T-cell (primary cell): ENCODE measurements at regions of chr6 and their contacts with region 1.

Region 1: DNA sequence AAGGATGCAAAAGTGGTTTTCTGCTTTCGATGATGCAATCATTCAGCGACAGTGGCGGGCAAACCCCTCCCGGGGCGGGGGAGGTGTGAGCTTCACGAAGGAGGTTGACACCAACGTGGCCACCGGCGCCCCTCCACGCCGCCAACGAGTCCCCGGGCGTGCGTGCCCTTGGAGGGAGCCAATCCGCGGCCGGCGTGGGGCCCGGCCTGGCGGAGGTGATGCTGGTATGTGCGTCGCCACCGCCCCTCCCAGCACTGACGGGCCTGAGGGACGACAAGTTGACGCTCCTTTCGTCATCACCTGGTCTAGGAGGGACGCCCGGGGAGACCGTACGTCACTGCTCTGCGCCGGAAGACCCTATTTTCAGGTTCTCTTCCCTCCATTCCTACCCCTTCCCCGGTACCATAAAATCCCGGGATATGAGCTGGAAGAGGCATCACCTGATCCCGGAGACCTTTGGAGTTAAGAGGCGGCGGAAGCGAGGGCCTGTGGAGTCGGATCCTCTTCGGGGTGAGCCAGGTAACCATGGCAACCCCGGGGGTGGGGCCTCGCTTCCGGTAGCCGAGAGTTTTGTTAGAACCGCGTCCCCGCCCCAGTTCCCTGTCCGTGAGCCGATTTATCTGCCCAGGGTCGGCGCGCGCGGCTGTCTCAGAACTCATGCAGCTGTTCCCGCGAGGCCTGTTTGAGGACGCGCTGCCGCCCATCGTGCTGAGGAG is at the start of gene DXO:
- DNase-seq: peak; percentile 91 to 100 (median 99)
- ATAC-seq: peak; percentile 90 to 94 (median 91)
- H3K4me3 ChIP-seq: peak within 1 kb of the TSS; percentile 83 to 95
- H3K4me3 Mint-ChIP-seq: peak within 1 kb of the TSS; percentile 92 to 98 (median 97)
- H3K27ac ChIP-seq: peak within 1 kb of the TSS; percentile 99
- H3K27ac Mint-ChIP-seq: peak within 1 kb of the TSS; percentile 100
- H3K4me1 ChIP-seq: peaks cover 12 to 26% of the 10 kb centered on the region in 2 experiments
- H3K4me1 Mint-ChIP-seq: peaks cover 39 to 49% (median 46%) of the 10 kb centered on the region in 3 donors
- H3K27me3 ChIP-seq: no peaks in the 10 kb centered on the region
- H3K27me3 Mint-ChIP-seq: no peaks in the 10 kb centered on the region
- total RNA-seq, gene DXO: 30.2 to 53.2 (median 35.4) TPM

Region 2: GRCh38 chr6:31927242-31927862 is 44.8 kb before region 1 on chr6 and contains the start of gene C2:
- CTCF ChIA-PET with region 1: no interaction called
- POLR2A ChIA-PET with region 1: no interaction called
- DNase-seq: no peak
- ATAC-seq: no peak
- H3K4me3 ChIP-seq: no peak within 1 kb of the TSS
- H3K4me3 Mint-ChIP-seq: no peak within 1 kb of the TSS
- H3K27ac ChIP-seq: no peak within 1 kb of the TSS
- H3K27ac Mint-ChIP-seq: no peak within 1 kb of the TSS
- H3K4me1 ChIP-seq: no peaks in the 10 kb centered on the region
- H3K4me1 Mint-ChIP-seq: no peaks in the 10 kb centered on the region
- H3K27me3 ChIP-seq: peaks cover 2 to 12% of the 10 kb centered on the region in 2 experiments
- H3K27me3 Mint-ChIP-seq: peaks cover 0 to 3% of the 10 kb centered on the region in 2 donors
- total RNA-seq, gene C2: 1.3 to 5.1 (median 3.7) TPM

Region 3: GRCh38 chr6:31940256-31940664 is 31.9 kb before region 1 on chr6:
- CTCF ChIA-PET with region 1: no interaction called
- POLR2A ChIA-PET with region 1: no interaction called
- DNase-seq: no peak
- ATAC-seq: no peak
- H3K4me3 ChIP-seq: no peak overlapping the region
- H3K4me3 Mint-ChIP-seq: no peak overlapping the region
- H3K27ac ChIP-seq: no peak overlapping the region
- H3K27ac Mint-ChIP-seq: no peak overlapping the region
- H3K4me1 ChIP-seq: no peaks in the 10 kb centered on the region
- H3K4me1 Mint-ChIP-seq: peaks cover 0 to 5% (median 0%) of the 10 kb centered on the region in 3 donors
- H3K27me3 ChIP-seq: peaks cover 0 to 35% of the 10 kb centered on the region in 2 experiments
- H3K27me3 Mint-ChIP-seq: peaks cover 8 to 21% of the 10 kb centered on the region in 2 donors

Region 4: DNA sequence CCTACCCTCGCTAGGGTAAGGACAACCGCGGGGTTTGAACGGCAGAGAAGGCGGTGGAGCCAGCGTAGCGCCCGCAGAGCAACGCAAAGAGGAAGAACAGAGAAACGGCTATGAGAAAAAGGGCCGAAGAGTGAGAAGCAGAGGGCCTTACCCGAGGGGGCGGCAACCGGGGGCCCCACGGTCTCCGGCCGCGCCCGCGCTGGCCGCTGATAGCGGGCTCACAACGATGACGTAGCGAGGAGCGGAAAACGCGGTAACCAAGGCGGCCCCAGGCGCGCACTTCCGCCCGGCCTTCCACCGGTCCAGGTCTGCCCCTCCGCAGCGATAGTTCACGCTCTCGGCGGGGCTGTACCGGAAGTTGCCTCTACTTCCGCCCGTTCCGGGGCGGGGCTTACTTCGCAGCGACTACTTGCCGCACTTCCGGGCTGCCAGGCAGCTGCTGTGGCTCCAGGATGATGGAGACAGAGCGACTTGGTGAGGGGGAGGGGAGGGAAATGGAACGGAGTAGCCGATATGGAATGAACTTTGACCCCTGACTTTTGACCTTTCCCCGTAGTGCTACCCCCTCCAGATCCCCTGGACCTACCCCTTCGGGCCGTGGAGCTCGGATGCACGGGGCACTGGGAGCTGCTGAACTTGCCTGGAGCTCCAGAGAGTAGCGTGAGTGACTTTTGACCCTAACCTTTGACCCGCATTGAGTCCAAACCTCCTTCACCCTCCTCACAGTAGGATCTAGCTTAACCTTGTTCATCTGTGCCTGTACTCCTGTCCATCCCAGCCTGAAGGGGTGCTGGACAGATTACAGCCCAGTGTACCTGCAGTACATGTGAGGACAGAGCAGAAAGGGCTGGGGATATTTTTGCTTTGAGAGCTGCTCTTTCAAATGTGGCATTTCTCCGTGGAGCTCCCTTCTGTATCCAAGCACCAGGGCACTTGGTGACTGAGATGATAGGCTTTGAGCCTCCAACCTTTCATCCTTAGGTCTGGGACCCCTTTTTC is 13.1 kb before region 1 on chr6 and contains the starts of genes NELFE and SKIC2:
- CTCF ChIA-PET with region 1: interaction called in 1 of 2 experiments, 4 read pairs
- POLR2A ChIA-PET with region 1: interaction called, 6 to 23 read pairs
- DNase-seq: peak; percentile 96 to 99 (median 98)
- ATAC-seq: peak; percentile 98 to 99 (median 99)
- H3K4me3 ChIP-seq: peak within 1 kb of the TSS; percentile 71 to 94
- H3K4me3 Mint-ChIP-seq: peak within 1 kb of the TSS; percentile 93 to 98 (median 94)
- H3K27ac ChIP-seq: peak within 1 kb of the TSS; percentile 90
- H3K27ac Mint-ChIP-seq: peak within 1 kb of the TSS; percentile 94 to 97
- H3K4me1 ChIP-seq: peaks cover 10 to 24% of the 10 kb centered on the region in 2 experiments
- H3K4me1 Mint-ChIP-seq: peaks cover 41 to 49% (median 45%) of the 10 kb centered on the region in 3 donors
- H3K27me3 ChIP-seq: no peaks in the 10 kb centered on the region
- H3K27me3 Mint-ChIP-seq: no peaks in the 10 kb centered on the region
- total RNA-seq, gene NELFE: 47.5 to 51.0 (median 49.4) TPM
- total RNA-seq, gene SKIC2: 104 to 169 (median 112) TPM

Region 5: DNA sequence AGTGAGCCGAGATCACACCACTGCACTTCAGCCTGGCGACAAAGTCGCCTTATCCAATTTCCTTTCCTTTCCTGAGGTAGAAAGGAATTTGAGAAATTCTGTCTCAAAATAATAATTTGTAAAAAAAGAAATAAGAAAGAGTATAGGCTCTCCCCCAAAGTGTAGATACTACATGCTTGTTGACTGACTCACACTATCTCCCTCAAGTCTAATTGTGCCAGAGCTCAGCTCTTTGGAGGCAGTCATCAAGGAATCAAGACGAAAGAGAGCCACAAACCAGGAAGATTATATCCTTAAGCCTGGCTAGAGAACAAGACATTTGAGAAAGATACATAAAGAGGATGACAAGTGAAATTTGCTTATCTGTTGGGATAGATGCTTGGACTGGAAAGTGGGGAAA is 161.6 kb after region 1 on chr6:
- CTCF ChIA-PET with region 1: no interaction called
- POLR2A ChIA-PET with region 1: interaction called in 1 of 2 experiments, 12 read pairs
- DNase-seq: no peak
- ATAC-seq: no peak
- H3K4me3 ChIP-seq: no peak overlapping the region
- H3K4me3 Mint-ChIP-seq: no peak overlapping the region
- H3K27ac ChIP-seq: no peak overlapping the region
- H3K27ac Mint-ChIP-seq: no peak overlapping the region
- H3K4me1 ChIP-seq: peaks cover 6 to 19% of the 10 kb centered on the region in 2 experiments
- H3K4me1 Mint-ChIP-seq: peaks cover 15 to 18% (median 16%) of the 10 kb centered on the region in 3 donors
- H3K27me3 ChIP-seq: peaks cover 0 to 4% of the 10 kb centered on the region in 2 experiments
- H3K27me3 Mint-ChIP-seq: no peaks in the 10 kb centered on the region